HCT116 (cell line): ENCODE measurements at regions of chr21 and their contacts with region 1.

Region 1: DNA sequence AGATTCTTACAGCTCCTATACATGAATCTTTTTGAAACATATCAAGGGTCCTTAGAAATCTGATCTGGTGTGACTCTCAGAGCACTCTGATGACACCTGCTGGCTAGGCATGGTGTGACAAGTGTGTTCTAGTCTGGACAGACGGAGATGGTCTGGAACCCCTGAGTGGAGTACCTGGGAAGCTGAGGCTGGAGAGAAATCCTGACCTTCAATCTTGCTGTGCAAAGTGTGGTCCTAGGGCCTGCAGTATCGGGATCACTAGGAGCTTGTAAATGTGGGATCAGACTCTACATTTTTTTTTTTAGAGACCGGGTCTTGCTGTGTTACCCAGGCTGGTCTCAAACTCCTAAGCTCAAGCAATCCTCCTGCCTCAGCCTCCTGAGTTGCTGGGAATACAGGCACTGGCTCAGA is 78.6 kb upstream of the SOD1 start:
- DNase-seq: peak; percentile 57
- ATAC-seq: peak; percentile 98
- H3K4me3 ChIP-seq: no peak overlapping the region
- H3K27ac ChIP-seq: no peak overlapping the region
- H3K4me1 ChIP-seq: no peaks in the 10 kb centered on the region
- H3K27me3 ChIP-seq: no peaks in the 10 kb centered on the region
- CTCF ChIP-seq: peak; percentile 77 to 88 (median 83); a peak in 5 of 6 replicates
- POLR2A ChIP-seq: no peak
- RAD21 ChIP-seq: peak; percentile 84

Region 2: GRCh38 chr21:31098576-31099005 is 482.3 kb before region 1 on chr21:
- CTCF ChIA-PET with region 1: interaction called, 16 read pairs
- POLR2A ChIA-PET with region 1: no interaction called
- RAD21 ChIA-PET with region 1: no interaction called
- intact Hi-C with region 1: no loop called
- DNase-seq: peak; percentile 51
- ATAC-seq: peak; percentile 97
- H3K4me3 ChIP-seq: no peak overlapping the region
- H3K27ac ChIP-seq: no peak overlapping the region
- H3K4me1 ChIP-seq: no peaks in the 10 kb centered on the region; a peak in 1 of 4 replicates
- H3K27me3 ChIP-seq: 0 out of 2 replicates have a peak, but pooled peaks cover 3% of the 10 kb centered on the region
- CTCF ChIP-seq: peak; percentile 65 to 94 (median 92)
- POLR2A ChIP-seq: no peak
- RAD21 ChIP-seq: peak; percentile 79

Region 3: GRCh38 chr21:31198575-31198974 is 382.3 kb before region 1 on chr21:
- CTCF ChIA-PET with region 1: interaction called, 44 read pairs
- POLR2A ChIA-PET with region 1: no interaction called
- RAD21 ChIA-PET with region 1: interaction called, 3 to 5 read pairs
- intact Hi-C with region 1: loop called (anchors 1 kb)
- DNase-seq: peak; percentile 48
- ATAC-seq: peak; percentile 76
- H3K4me3 ChIP-seq: no peak overlapping the region
- H3K27ac ChIP-seq: no peak overlapping the region
- H3K4me1 ChIP-seq: peaks cover 13% of the 10 kb centered on the region in 2 experiments
- H3K27me3 ChIP-seq: no peaks in the 10 kb centered on the region
- CTCF ChIP-seq: peak; percentile 48 to 71 (median 62); a peak in 5 of 6 replicates
- POLR2A ChIP-seq: no peak
- RAD21 ChIP-seq: peak; percentile 78

Region 4: GRCh38 chr21:31343680-31344480 is 237.0 kb before region 1 on chr21 and contains the start of gene TIAM1:
- CTCF ChIA-PET with region 1: interaction called, 4 read pairs
- POLR2A ChIA-PET with region 1: no interaction called
- RAD21 ChIA-PET with region 1: no interaction called
- intact Hi-C with region 1: loop called (anchors 10 kb)
- DNase-seq: no peak
- ATAC-seq: peak; percentile 88
- H3K4me3 ChIP-seq: peak within 1 kb of the TSS; percentile 31 to 37
- H3K27ac ChIP-seq: peak within 1 kb of the TSS; percentile 5; the same call in 1 of the 2 replicates
- H3K4me1 ChIP-seq: peaks cover 27 to 43% of the 10 kb centered on the region in 2 experiments
- H3K27me3 ChIP-seq: no peaks in the 10 kb centered on the region
- CTCF ChIP-seq: no peak
- POLR2A ChIP-seq: no peak
- RAD21 ChIP-seq: no peak
- total RNA-seq, gene TIAM1: 47.8 TPM

Region 5: DNA sequence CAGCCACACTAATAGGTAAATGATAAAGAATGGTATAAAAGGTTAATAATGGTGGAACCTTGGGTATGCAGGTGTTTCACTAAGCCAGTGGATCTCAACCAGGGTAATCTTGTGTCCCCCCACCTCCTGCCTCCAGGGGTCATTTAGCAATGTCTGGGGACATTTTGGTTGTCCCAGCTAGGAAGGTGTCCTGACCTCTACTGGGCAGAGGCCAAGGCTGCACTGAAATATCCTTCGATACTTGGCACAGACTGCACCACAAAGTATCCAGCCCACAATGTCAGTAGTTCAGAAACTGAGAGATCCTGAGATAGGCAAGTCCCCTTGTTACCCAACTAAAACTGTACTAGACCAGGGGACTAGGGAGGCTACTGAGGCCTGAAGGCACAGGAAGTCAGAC is 123.2 kb before region 1 on chr21:
- CTCF ChIA-PET with region 1: interaction called, 30 read pairs
- POLR2A ChIA-PET with region 1: no interaction called
- RAD21 ChIA-PET with region 1: interaction called in 1 of 2 experiments, 6 read pairs
- intact Hi-C with region 1: loop called (anchors 2 kb)
- DNase-seq: no peak
- ATAC-seq: peak; percentile 64
- H3K4me3 ChIP-seq: no peak overlapping the region
- H3K27ac ChIP-seq: no peak overlapping the region
- H3K4me1 ChIP-seq: peaks cover 7 to 17% of the 10 kb centered on the region in 2 experiments; a peak in 2 of 4 replicates
- H3K27me3 ChIP-seq: no peaks in the 10 kb centered on the region
- CTCF ChIP-seq: peak; percentile 22 to 61 (median 53); a peak in 5 of 6 replicates
- POLR2A ChIP-seq: no peak
- RAD21 ChIP-seq: no peak; the same call in 1 of the 2 replicates

Region 6: DNA sequence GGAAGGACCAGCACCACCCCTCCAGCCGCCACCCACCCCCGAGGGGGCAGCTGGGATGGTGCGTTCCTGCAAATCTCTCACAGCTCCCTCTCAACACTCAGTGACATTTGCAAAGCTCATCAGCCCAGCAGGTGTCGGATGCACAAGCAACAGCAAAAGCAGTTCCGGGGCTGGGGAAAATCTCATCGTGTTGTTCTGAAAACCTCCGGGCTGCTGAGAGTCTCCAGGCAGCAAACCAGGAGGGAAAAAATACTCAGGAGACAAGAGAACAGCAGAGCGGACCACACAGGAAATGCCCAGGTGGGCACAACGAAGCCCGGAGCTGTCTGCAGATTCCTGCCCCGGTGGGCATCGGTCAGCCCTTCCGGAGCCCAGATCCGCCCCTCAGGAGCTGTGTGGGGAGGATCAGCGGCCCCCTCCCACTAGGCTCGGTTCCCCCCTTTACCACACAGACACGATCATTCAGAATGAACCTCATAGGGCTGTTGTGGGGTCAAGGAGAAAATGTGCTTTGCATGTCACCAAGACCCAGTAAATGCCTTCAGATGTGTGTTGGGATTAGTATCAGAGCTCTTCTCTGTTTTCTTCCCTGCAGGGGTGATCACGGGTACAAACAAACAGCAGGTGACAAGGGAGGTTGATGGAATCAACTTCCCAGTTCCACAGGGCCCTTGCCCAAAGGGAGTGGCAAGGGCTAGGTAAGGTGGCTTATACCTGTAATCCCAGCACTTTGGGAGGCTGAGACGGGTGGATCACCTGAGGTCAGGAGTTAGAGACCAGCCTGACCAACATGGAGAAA is 109.8 kb before region 1 on chr21:
- CTCF ChIA-PET with region 1: no interaction called
- POLR2A ChIA-PET with region 1: no interaction called
- RAD21 ChIA-PET with region 1: no interaction called
- intact Hi-C with region 1: no loop called
- DNase-seq: no peak
- ATAC-seq: no peak
- H3K4me3 ChIP-seq: no peak overlapping the region
- H3K27ac ChIP-seq: no peak overlapping the region
- H3K4me1 ChIP-seq: no peaks in the 10 kb centered on the region
- H3K27me3 ChIP-seq: no peaks in the 10 kb centered on the region
- CTCF ChIP-seq: no peak
- POLR2A ChIP-seq: no peak
- RAD21 ChIP-seq: no peak

Region 7: GRCh38 chr21:31592963-31593560 is 12.2 kb after region 1 on chr21:
- CTCF ChIA-PET with region 1: interaction called, 12 read pairs
- POLR2A ChIA-PET with region 1: no interaction called
- RAD21 ChIA-PET with region 1: no interaction called
- intact Hi-C with region 1: no loop called
- DNase-seq: no peak
- ATAC-seq: no peak
- H3K4me3 ChIP-seq: no peak overlapping the region
- H3K27ac ChIP-seq: no peak overlapping the region
- H3K4me1 ChIP-seq: no peaks in the 10 kb centered on the region
- H3K27me3 ChIP-seq: no peaks in the 10 kb centered on the region
- CTCF ChIP-seq: no peak
- POLR2A ChIP-seq: no peak
- RAD21 ChIP-seq: no peak

Region 8: GRCh38 chr21:31710586-31710985 is 129.7 kb after region 1 on chr21:
- CTCF ChIA-PET with region 1: no interaction called
- POLR2A ChIA-PET with region 1: no interaction called
- RAD21 ChIA-PET with region 1: no interaction called
- intact Hi-C with region 1: no loop called
- DNase-seq: no peak
- ATAC-seq: no peak
- H3K4me3 ChIP-seq: no peak overlapping the region
- H3K27ac ChIP-seq: no peak overlapping the region
- H3K4me1 ChIP-seq: peaks cover 4 to 12% of the 10 kb centered on the region in 2 experiments; a peak in 2 of 4 replicates
- H3K27me3 ChIP-seq: no peaks in the 10 kb centered on the region
- CTCF ChIP-seq: no peak
- POLR2A ChIP-seq: no peak
- RAD21 ChIP-seq: no peak

Region 9: GRCh38 chr21:31744182-31744800 is 163.4 kb after region 1 on chr21:
- CTCF ChIA-PET with region 1: no interaction called
- POLR2A ChIA-PET with region 1: no interaction called
- RAD21 ChIA-PET with region 1: no interaction called
- intact Hi-C with region 1: no loop called
- DNase-seq: no peak
- ATAC-seq: no peak
- H3K4me3 ChIP-seq: no peak overlapping the region
- H3K27ac ChIP-seq: no peak overlapping the region
- H3K4me1 ChIP-seq: no peaks in the 10 kb centered on the region
- H3K27me3 ChIP-seq: no peaks in the 10 kb centered on the region
- CTCF ChIP-seq: no peak
- POLR2A ChIP-seq: no peak
- RAD21 ChIP-seq: no peak